Activated T-helper 1 cell treated with anti-CD3 and anti-CD28 coated beads, Interleukin-12 subunit alpha, Interleukin-12 subunit beta, Interleukin-2, Interleukin-4 antibody, amounts not matched to agents 30 ng/mL and 10 ng/mL and 1 ng/mL, durations not matched to agents 14 hours and 24 hours and 36 hours (primary cell): ENCODE measurements at regions of chr16 and their contacts with region 1.

Region 1: GRCh38 chr16:3264137-3265036 is 8.0 kb upstream of the MEFV start:
- DNase-seq: peak; percentile 95
- H3K4me3 Mint-ChIP-seq: peak overlapping the region; percentile 89
- H3K27ac Mint-ChIP-seq: peak overlapping the region; percentile 92
- H3K4me1 Mint-ChIP-seq: peaks cover 20% of the 10 kb centered on the region
- H3K27me3 Mint-ChIP-seq: no peaks in the 10 kb centered on the region

Region 2: GRCh38 chr16:3182608-3183444 is 81.6 kb before region 1 on chr16:
- intact Hi-C with region 1: loop called (anchors 2 kb)
- DNase-seq: no peak
- H3K4me3 Mint-ChIP-seq: peak overlapping the region; percentile 83
- H3K27ac Mint-ChIP-seq: peak overlapping the region; percentile 94
- H3K4me1 Mint-ChIP-seq: peaks cover 28% of the 10 kb centered on the region
- H3K27me3 Mint-ChIP-seq: peaks cover 68% of the 10 kb centered on the region

Region 3: GRCh38 chr16:3282730-3283524 is 18.5 kb after region 1 on chr16 and contains the start of gene ZNF263:
- intact Hi-C with region 1: loop called (anchors 1 kb)
- DNase-seq: peak; percentile 90
- H3K4me3 Mint-ChIP-seq: peak within 1 kb of the TSS; percentile 96
- H3K27ac Mint-ChIP-seq: peak within 1 kb of the TSS; percentile 97
- H3K4me1 Mint-ChIP-seq: peaks cover 23% of the 10 kb centered on the region
- H3K27me3 Mint-ChIP-seq: no peaks in the 10 kb centered on the region
- total RNA-seq, gene ZNF263: 25.5 and 27.8 TPM in 2 replicates

Region 4: DNA sequence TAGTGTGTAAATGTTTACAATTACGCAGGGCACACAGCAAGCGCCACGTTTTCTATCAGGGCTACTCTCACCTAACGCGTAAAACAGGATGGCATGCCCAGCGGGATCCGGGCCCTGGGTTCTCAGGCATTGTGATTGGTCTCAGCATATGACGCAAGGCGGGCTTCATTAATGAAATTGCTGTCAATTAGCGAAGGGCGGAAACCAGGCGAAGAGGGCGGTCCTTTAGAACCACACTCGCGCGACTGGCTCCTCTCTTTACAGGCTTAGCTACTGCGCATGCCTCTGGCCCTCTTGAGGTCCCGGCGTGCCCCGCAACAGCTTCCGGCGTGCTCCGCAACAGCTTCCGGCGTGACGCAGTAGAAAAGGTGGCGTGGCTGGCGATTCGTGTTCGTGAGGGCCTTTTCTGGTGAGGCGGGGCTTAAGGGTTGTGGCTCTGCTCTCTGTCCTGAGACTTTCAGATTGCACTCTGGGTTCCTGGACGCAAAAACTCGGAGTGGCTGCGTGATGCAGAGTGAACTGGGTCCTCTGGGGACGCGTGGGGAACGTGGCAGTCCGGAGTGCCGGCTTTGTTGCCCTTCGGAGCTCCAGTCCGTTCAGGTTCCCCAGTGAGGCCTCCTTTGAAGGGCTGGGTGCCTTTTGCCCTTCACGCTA is 100.5 kb after region 1 on chr16:
- intact Hi-C with region 1: loop called (anchors 1 kb)
- DNase-seq: peak; percentile 63
- H3K4me3 Mint-ChIP-seq: peak overlapping the region; percentile 68
- H3K27ac Mint-ChIP-seq: peak overlapping the region; percentile 53
- H3K4me1 Mint-ChIP-seq: no peaks in the 10 kb centered on the region
- H3K27me3 Mint-ChIP-seq: peaks cover 2% of the 10 kb centered on the region

Region 5: GRCh38 chr16:3503523-3503922 is 239.1 kb after region 1 on chr16:
- intact Hi-C with region 1: loop called (anchors 1 kb)
- DNase-seq: peak; percentile 65
- H3K4me3 Mint-ChIP-seq: peak overlapping the region; percentile 77
- H3K27ac Mint-ChIP-seq: peak overlapping the region; percentile 90
- H3K4me1 Mint-ChIP-seq: peaks cover 68% of the 10 kb centered on the region
- H3K27me3 Mint-ChIP-seq: peaks cover 3% of the 10 kb centered on the region